ENCODE measurements at regions of chr9 and their contacts with region 1.

Region 1: DNA sequence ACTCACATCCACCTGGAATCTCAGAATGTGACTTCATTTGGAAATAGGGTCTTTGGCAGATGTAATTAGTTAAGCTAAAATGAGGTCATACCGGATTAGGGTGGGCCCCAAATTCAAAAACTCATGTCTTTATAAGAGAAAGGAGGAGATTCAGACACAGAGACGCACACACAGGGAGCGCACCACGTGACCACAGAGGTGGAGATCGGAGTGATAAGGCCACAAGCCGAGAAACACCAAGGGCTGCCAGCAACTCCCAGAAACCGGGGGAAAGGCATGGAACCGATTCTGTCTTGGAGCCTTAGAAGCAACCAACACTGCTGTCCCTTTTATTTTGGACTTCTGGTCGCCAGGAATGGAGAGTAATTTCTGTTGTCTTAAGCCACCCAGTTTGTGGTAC is 31.8 kb upstream of the LMX1B start:
- DNase-seq: no peak
- H3K4me3 ChIP-seq: no peak overlapping the region
- H3K27ac ChIP-seq: no peak overlapping the region
- H3K4me1 ChIP-seq: peaks cover 0 to 7% (median 3%) of the 10 kb centered on the region in 4 experiments; a peak in 4 of 7 replicates
- H3K27me3 ChIP-seq: 0 out of 7 replicates have a peak, but pooled peaks cover 0 to 2% (median 0%) of the 10 kb centered on the region in 4 experiments
- CTCF ChIP-seq: no peak
- EP300 ChIP-seq: no peak
- POLR2A ChIP-seq: no peak
- RAD21 ChIP-seq: no peak

Region 2: GRCh38 chr9:126558051-126558665 is 23.7 kb before region 1 on chr9:
- CTCF ChIA-PET with region 1: interaction called, 19 read pairs
- POLR2A ChIA-PET with region 1: no interaction called
- DNase-seq: peak; percentile 29 to 93
- H3K4me3 ChIP-seq: no peak overlapping the region
- H3K27ac ChIP-seq: no peak overlapping the region
- H3K4me1 ChIP-seq: peaks cover 0 to 2% (median 0%) of the 10 kb centered on the region in 4 experiments; a peak in 2 of 7 replicates
- H3K27me3 ChIP-seq: no peaks in the 10 kb centered on the region; a peak in 1 of 7 replicates
- CTCF ChIP-seq: peak; percentile 98 to 99 (median 98)
- EP300 ChIP-seq: no peak
- POLR2A ChIP-seq: no peak
- RAD21 ChIP-seq: peak; percentile 96 to 98

Region 3: DNA sequence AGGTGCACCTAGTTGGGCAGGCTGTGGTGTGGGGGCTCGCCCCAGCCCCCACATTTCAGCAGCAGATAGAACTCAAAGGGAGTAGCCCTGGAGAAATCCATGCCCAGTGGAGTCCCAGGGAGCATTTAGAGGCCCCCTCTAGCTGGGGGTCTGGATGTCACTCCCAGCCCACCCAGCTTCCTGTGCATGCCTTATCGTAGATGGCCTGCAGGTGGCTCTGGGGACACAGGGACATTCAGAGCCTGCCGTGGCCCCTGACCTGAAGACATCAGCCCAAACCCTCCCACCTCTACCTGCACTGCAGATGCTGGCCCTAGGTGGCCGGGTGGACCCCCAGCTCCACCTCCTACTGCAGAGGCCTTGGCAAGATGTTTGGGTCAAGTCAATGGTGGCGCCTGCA is 17.2 kb before region 1 on chr9:
- CTCF ChIA-PET with region 1: interaction called, 19 read pairs
- POLR2A ChIA-PET with region 1: no interaction called
- DNase-seq: no peak
- H3K4me3 ChIP-seq: no peak overlapping the region
- H3K27ac ChIP-seq: no peak overlapping the region
- H3K4me1 ChIP-seq: no peaks in the 10 kb centered on the region; a peak in 1 of 7 replicates
- H3K27me3 ChIP-seq: peaks cover 0 to 3% (median 0%) of the 10 kb centered on the region in 4 experiments; a peak in 2 of 7 replicates
- CTCF ChIP-seq: peak; percentile 69 to 73 (median 71)
- EP300 ChIP-seq: no peak
- POLR2A ChIP-seq: no peak
- RAD21 ChIP-seq: peak; percentile 41 to 64

Region 4: DNA sequence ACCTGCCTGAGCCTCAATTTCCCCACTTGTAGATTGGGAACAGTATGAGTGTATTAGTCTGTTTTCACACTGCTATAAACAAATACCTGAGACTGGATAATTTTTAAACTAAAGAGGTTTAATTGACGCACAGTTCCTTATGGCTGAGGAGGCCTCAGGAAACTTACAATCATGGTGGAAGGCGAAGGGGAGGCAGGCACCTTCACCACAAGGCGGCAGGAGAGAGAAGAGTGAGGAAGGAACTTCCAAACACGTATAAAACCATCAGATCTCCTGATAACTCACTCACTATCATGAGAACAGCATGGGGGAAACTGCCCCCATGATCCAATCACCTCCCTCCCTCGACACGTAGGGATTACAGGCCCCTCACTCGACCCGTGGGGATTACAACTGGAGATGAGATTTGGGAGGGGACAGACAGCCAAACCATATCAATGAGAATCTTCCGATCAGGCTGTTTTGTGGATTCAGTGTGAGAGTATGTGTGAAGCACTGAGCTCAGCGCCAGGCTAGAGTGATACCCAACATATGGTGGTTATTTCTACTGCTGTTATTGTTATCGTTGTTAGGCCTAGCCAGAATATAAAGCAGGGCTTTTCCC is 17.3 kb after region 1 on chr9:
- CTCF ChIA-PET with region 1: interaction called, 43 read pairs
- POLR2A ChIA-PET with region 1: no interaction called
- DNase-seq: peak in 1 of 2 experiments; percentile 62
- H3K4me3 ChIP-seq: no peak overlapping the region
- H3K27ac ChIP-seq: no peak overlapping the region
- H3K4me1 ChIP-seq: no peaks in the 10 kb centered on the region
- H3K27me3 ChIP-seq: peaks cover 0 to 3% (median 1%) of the 10 kb centered on the region in 4 experiments; a peak in 3 of 7 replicates
- CTCF ChIP-seq: peak; percentile 50 to 70 (median 63)
- EP300 ChIP-seq: no peak
- POLR2A ChIP-seq: no peak
- RAD21 ChIP-seq: peak; percentile 27 to 46; a peak in 3 of 4 replicates

Measured in H1 (cell line).